ENCODE measurements at regions of chr11 and their contacts with region 1.

Region 1: GRCh38 chr11:125320347-125321076 is 156.0 kb downstream of the PKNOX2 start:
- DNase-seq: no peak
- H3K4me3 ChIP-seq: no peak overlapping the region
- H3K27ac ChIP-seq: no peak overlapping the region
- H3K4me1 ChIP-seq: peaks cover 0 to 6% (median 3%) of the 10 kb centered on the region in 4 experiments; a peak in 4 of 7 replicates
- H3K27me3 ChIP-seq: no peaks in the 10 kb centered on the region
- CTCF ChIP-seq: peak in 2 of 3 experiments; percentile 4 to 38; a peak in 2 of 4 replicates
- EP300 ChIP-seq: no peak
- POLR2A ChIP-seq: no peak
- RAD21 ChIP-seq: peak; percentile 39 to 55

Region 2: GRCh38 chr11:125358254-125358840 is 37.8 kb after region 1 on chr11:
- CTCF ChIA-PET with region 1: interaction called, 12 read pairs
- POLR2A ChIA-PET with region 1: no interaction called
- DNase-seq: no peak
- H3K4me3 ChIP-seq: no peak overlapping the region
- H3K27ac ChIP-seq: no peak overlapping the region
- H3K4me1 ChIP-seq: peaks cover 0 to 2% (median 0%) of the 10 kb centered on the region in 4 experiments; a peak in 1 of 7 replicates
- H3K27me3 ChIP-seq: no peaks in the 10 kb centered on the region
- CTCF ChIP-seq: no peak
- EP300 ChIP-seq: no peak
- POLR2A ChIP-seq: no peak
- RAD21 ChIP-seq: no peak

Measured in H1 (cell line).